T-cell (primary cell): ENCODE measurements at regions of chr2 and their contacts with region 1.

Region 1: DNA sequence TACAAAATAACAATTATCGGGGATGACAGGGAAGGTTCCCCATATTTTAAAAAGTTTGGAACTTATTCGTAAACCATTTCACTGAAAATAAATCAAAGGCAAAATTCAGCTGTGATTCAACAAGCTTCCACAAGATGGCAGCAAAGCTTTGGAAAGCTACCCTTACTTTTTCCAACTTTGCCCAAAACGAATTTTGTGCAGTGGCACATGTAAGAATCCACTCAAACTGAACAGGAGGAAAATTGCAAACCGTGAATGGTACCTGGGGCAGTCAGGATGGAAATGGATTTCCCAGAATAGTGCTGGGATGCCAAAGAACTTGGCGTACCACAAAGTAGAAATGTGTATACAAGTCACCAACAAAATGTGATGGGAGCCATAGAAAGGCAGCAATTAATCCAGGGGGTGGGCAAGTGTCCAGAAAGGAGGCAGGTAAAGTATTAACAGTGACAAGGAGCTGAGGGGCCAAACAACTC is 10.7 kb downstream of the RPL31 start:
- DNase-seq: peak in 16 of 35 experiments; percentile 9 to 71 (median 16)
- ATAC-seq: no peak
- H3K4me3 ChIP-seq: no peak overlapping the region
- H3K4me3 Mint-ChIP-seq: no peak overlapping the region
- H3K27ac ChIP-seq: no peak overlapping the region
- H3K27ac Mint-ChIP-seq: peak overlapping the region in 1 of 2 donors; percentile 18
- H3K4me1 ChIP-seq: no peaks in the 10 kb centered on the region
- H3K4me1 Mint-ChIP-seq: peaks cover 15 to 24% (median 16%) of the 10 kb centered on the region in 3 donors
- H3K27me3 ChIP-seq: no peaks in the 10 kb centered on the region
- H3K27me3 Mint-ChIP-seq: no peaks in the 10 kb centered on the region

Region 2: DNA sequence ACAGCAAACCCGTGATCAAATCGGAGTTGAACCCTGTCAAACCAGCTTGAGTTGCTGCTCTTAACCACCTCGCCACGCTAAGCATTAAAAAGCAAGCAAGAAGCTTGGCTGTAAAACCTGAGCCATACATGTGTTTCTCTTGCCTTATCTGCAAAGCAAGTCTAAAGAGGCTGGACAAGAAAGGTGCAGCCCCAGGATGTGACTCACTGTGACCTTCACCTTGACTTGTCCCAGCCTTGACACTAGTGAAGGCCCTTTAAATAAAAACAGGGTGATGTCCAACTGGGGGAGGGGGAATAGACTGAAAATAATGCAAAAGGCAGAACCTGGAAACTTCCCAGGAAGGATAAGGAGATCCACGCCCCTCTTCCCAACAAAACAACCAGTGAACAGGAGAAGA is 320.4 kb before region 1 on chr2:
- CTCF ChIA-PET with region 1: no interaction called
- POLR2A ChIA-PET with region 1: no interaction called
- DNase-seq: no peak
- ATAC-seq: no peak
- H3K4me3 ChIP-seq: no peak overlapping the region
- H3K4me3 Mint-ChIP-seq: no peak overlapping the region
- H3K27ac ChIP-seq: no peak overlapping the region
- H3K27ac Mint-ChIP-seq: no peak overlapping the region
- H3K4me1 ChIP-seq: no peaks in the 10 kb centered on the region
- H3K4me1 Mint-ChIP-seq: peaks cover 0 to 6% (median 0%) of the 10 kb centered on the region in 3 donors
- H3K27me3 ChIP-seq: peaks cover 0 to 11% of the 10 kb centered on the region in 2 experiments
- H3K27me3 Mint-ChIP-seq: peaks cover 4 to 18% of the 10 kb centered on the region in 2 donors

Region 3: DNA sequence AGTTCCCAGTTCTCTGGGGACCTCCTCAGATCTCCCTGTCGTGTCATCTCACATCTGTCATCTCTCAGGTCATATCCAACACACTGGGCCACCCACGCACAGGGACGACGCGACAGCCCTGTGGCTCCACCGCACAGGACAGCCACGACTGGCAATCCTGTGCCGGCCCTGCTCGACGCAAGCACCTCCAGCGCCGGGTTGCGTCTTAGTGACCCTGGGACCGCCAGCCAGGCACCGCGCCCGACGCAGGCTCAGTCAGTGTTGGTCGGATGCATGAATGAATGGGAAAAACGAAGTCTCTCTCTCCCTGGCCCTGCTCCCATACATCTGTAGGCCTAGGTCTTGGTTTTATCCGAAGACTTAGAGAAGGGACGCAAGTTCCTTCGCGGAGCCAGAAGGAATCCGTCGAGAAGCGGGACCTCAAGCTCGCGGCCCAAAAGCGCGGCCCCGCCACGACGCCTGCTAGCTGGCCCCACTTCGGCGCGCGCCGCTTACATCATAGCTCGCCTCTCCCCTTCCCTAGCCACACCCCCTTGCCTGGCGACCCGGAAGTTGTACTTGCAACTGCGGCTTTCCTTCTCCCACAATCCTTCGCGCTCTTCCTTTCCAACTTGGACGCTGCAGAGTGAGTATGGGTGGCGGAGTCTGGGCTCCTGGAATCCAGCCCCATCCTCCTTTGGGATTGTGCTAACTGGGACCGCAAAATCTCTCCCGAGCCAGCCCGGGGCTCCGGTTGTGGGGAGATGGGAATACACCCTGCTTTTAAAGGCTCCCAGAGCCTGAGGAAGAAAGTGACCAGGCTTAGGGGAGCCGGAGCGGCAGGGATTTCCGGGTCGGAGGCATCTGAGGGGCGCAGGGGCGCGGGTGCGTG is 10.8 kb before region 1 on chr2 and contains the start of gene RPL31:
- CTCF ChIA-PET with region 1: interaction called, 3 to 13 read pairs
- POLR2A ChIA-PET with region 1: interaction called in 1 of 2 experiments, 3 read pairs
- DNase-seq: peak; percentile 81 to 98 (median 96)
- ATAC-seq: peak; percentile 94 to 96 (median 95)
- H3K4me3 ChIP-seq: peak within 1 kb of the TSS; percentile 96 to 98
- H3K4me3 Mint-ChIP-seq: peak within 1 kb of the TSS; percentile 88 to 96 (median 95)
- H3K27ac ChIP-seq: peak within 1 kb of the TSS; percentile 87
- H3K27ac Mint-ChIP-seq: peak within 1 kb of the TSS; percentile 96 to 97
- H3K4me1 ChIP-seq: peaks cover 10 to 31% of the 10 kb centered on the region in 2 experiments
- H3K4me1 Mint-ChIP-seq: peaks cover 46 to 49% (median 46%) of the 10 kb centered on the region in 3 donors
- H3K27me3 ChIP-seq: no peaks in the 10 kb centered on the region
- H3K27me3 Mint-ChIP-seq: no peaks in the 10 kb centered on the region
- total RNA-seq, gene RPL31: 1,802 to 2,371 (median 2,279) TPM

Region 4: DNA sequence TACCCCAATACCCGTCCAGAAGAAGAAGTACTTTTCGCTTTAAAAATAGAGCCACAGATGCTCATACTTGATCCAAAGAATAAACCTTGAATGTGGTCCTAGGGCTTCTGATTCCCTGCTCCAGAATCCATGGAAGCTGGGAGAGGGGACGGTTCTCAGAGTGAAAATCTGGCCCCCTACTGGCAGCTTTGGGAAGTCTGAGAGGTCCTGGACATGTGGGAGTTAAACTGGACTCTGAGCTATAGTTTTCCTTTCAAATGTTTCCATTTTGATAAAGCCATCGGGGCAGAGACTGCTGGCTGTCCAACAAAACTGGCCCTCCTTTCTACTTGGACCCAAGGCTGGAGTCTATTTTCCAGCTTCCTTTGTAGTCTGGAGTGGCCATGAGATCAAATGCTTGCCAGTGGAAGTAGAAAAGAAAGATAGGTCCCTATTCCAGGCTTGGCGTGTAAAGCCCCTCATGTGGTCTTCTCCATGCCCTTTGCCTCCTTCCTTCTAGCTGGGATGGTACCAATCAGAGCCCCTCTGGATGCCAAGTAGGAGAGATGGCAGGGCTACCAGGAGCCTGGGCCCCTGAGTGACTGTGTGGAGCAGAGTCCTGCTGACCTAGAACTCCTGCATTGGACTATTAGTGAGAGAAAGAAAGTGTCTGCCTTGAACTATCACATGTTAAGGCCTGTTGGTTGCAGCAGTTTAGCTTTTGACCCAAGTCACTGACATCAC is 176.1 kb after region 1 on chr2:
- CTCF ChIA-PET with region 1: no interaction called
- POLR2A ChIA-PET with region 1: no interaction called
- DNase-seq: no peak
- ATAC-seq: no peak
- H3K4me3 ChIP-seq: no peak overlapping the region
- H3K4me3 Mint-ChIP-seq: no peak overlapping the region
- H3K27ac ChIP-seq: no peak overlapping the region
- H3K27ac Mint-ChIP-seq: no peak overlapping the region
- H3K4me1 ChIP-seq: no peaks in the 10 kb centered on the region
- H3K4me1 Mint-ChIP-seq: no peaks in the 10 kb centered on the region
- H3K27me3 ChIP-seq: peaks cover 0 to 11% of the 10 kb centered on the region in 2 experiments
- H3K27me3 Mint-ChIP-seq: peaks cover 0 to 4% of the 10 kb centered on the region in 2 donors

Region 5: DNA sequence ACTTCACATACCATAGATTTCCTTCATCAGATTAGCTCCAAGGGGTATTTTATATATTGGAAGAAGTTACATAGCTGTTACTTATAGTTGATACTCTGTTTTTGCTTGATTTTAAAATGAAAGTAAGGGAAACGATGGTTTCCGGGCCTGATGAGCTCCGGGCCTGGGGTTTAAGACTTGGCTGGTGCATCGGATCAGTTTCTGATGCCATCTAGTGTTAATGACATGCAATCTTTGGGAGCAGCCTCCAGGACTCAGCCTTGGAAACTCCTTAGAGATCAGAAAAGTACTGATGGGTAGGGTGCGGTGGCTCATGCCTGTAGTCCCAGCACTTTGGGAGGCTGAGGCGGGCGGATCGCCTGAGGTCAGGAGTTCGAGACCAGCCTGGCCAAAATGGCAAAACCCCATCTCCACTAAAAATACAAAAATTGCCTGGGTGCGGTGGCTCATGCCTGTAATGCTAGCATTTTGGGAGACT is 192.8 kb after region 1 on chr2:
- CTCF ChIA-PET with region 1: interaction called, 6 to 42 read pairs
- POLR2A ChIA-PET with region 1: interaction called in 1 of 2 experiments, 4 read pairs
- DNase-seq: peak in 33 of 35 experiments; percentile 6 to 69 (median 31)
- ATAC-seq: peak; percentile 86 to 96 (median 94)
- H3K4me3 ChIP-seq: no peak overlapping the region
- H3K4me3 Mint-ChIP-seq: peak overlapping the region; percentile 37 to 58 (median 53)
- H3K27ac ChIP-seq: peak overlapping the region; percentile 49
- H3K27ac Mint-ChIP-seq: peak overlapping the region; percentile 73 to 83
- H3K4me1 ChIP-seq: peaks cover 3 to 7% of the 10 kb centered on the region in 2 experiments
- H3K4me1 Mint-ChIP-seq: peaks cover 11 to 14% (median 13%) of the 10 kb centered on the region in 3 donors
- H3K27me3 ChIP-seq: peaks cover 0 to 2% of the 10 kb centered on the region in 2 experiments
- H3K27me3 Mint-ChIP-seq: no peaks in the 10 kb centered on the region